Posterior cingulate gyrus (tissue), 11 donors: ENCODE measurements at regions of chr17 and their contacts with region 1.

Region 1: GRCh38 chr17:28982131-28982951 is 23.5 kb downstream of the SEZ6 start:
- DNase-seq: no peak

Region 2: GRCh38 chr17:28792877-28793661 is 189.3 kb before region 1 on chr17:
- intact Hi-C with region 1: no loop called
- DNase-seq: no peak

Region 3: DNA sequence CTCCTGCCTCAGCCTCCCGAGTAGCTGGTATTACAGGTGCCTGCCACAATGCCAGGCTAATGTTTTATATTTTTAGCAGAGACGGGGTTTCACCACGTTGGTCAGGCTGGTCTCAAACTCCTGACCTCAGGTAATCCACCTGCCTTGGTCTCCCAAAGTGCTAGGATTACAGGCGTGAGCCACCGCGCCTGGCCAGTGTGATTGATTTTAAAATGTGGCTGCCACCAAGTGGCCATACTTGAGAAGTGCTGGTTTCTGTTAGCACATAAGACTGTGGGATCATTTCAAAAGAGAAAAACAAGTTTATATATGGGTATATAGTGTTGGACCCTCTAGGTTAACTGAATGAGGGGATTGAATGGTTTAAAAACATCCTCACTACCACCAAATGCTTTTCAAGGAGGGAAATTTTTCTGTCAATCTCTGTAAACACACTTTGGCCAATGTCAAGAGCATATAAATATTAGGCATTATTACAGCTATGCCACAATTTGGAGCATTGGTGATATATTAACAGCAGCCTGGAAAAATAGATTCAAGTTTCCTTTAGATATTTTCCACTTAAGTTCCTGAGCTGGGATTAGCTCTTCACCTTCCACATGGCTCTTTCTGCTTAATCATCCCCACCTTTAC is 65.9 kb before region 1 on chr17:
- intact Hi-C with region 1: no loop called
- DNase-seq: peak in 7 of 10 donors; percentile 33 to 90 (median 53)

Region 4: DNA sequence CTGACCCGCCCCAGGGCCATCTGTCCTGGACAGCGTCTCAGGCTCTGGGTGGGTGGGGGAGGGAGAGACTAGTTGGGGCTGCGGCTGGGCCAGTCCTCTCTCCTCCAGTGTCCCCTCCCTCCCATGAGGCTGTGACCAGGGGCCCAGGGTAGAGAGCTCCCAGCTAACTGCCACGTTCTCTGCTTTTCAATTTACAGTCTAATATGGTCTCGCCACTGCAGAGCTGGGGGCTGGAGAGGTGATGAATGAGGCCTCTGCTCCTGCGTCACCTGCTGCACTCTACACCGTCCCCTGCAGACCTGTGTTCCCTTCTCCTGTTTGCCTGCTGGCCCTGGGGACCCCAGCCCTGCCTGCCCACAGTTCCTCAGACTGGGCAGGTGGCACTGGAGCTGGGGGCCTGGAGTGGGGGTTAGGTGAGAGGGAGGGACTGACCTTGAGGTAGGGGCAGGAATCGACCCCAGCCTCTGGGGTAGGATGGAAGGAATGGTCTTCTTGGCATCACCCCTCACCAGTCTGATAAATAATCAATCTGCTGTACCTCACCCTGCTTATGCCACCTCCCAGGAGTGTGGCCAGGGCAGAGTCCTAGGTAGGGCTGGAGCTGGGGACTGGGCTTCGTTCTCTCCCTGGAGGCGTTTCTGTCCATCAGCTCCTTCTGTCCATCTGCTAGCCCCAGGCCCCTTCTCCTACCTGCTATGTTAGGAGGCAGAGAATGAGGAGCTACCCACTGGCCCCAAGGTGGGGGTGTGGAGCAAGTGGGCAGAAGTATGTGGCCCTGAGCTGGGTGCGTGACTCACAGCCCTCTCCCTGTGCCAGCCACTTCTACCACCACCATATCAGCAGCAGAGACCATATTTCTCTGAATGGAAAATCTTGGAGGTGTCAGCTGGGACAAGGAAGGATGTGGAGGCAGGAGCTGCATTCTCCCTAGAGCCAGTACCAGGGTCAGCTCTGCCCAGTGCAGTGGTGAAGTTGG is 10.6 kb after region 1 on chr17:
- intact Hi-C with region 1: no loop called
- DNase-seq: no peak

Region 5: DNA sequence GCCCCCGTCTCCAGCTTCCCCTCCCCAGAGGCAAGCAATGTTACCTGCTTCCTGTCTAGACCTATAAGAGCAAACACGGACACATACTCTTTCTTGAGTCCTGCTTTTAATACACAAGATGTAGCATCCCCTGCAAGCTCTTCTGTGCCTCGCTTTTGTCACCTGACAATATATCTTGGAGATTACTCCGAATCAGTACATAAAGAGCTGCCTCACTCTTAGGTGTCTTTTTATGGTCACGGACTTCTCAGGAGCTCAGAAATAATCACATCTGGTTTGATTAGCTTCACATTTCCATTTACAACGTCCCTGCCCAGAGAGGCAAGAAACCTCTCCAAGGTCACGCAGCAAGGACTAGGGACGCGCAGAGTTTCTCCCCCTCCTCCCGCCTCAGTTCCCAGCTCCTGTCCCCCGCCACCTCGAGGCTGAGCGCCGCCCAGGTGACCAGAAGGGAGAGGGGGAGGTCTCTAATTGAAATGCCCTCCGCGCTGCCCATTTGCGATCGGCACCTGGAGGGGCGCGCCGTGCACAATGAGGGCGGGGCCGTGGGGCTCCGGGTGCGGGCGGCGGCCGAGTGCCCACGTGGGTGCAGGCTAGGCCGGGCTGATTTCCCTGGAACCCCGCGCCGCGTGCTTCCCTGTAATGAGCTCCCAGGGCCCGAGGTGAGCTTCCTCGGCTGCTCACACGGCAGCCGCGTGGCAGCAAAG is 37.3 kb after region 1 on chr17:
- intact Hi-C with region 1: no loop called
- DNase-seq: peak in 3 of 10 donors; percentile 83 to 90 (median 84)

Region 6: DNA sequence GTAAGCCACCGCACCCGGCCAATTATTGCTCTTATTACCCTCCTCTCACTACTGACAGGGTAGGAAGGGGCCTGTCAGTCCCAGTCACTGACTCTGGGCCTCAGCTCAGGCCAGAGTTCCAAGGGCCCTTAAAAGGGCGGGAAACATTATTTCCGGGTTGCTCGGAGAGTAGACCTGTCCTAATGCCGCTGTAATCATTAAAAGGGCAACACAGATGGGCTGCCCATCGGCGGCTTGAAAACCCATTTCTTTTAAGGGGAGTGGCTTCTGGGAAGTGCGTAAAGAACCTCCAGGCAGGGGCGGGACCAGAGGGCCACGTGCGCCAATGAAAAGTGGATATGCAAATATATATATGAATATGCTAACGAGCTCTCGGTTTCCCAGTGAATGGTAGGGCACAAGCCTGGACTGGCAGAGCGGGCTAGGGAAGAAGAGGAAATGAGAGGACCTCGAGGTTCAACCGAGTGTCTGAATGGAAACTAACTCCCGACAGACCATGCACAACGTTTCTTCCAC is 87.2 kb after region 1 on chr17:
- intact Hi-C with region 1: loop called (anchors 5 kb)
- DNase-seq: peak in 4 of 10 donors; percentile 39 to 91 (median 66)